CD14-positive monocyte (primary cell): ENCODE measurements at regions of chr1 and their contacts with region 1.

Region 1: DNA sequence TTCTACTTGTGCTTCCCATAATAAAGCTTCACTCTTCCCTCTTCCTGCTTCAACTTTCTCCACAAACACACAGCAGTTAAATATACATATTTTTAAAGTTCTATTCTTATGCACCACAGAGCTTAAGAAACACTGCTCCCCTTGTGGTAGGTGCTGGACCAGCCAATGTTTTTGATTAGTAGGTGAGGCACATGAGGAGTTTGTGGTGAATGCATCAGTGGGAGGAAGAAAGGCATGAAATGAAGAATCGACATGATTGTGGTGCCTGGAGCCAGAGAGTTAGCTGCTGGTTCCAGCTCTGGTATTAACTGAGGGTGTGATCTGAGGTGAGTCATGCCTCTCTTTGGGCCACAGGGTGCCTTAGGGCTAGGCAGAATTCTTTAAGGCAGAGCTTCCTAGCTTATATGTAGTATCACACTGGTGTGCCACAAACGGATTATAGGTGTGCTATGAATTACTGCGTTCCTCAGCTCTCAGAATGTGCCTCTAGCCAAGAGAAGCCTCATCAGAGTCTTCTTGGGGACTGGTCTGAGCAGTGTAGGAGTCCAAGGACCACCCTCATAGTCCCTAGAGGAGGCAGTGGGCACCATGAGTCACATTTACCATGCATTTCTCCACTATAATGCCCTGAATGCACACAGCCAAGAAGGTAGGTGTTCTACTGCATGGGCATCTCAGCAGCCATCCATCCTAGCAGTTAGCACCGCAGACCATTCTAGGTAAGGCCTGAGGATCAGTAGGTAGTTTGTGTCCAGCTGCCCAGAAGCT is 97.4 kb upstream of the SGIP1 start:
- DNase-seq: peak in 2 of 3 donors; percentile 19 to 60
- H3K4me3 ChIP-seq: no peak overlapping the region
- H3K4me3 Mint-ChIP-seq: no peak overlapping the region
- H3K27ac ChIP-seq: no peak overlapping the region
- H3K27ac Mint-ChIP-seq: peak overlapping the region in 5 of 7 donors; percentile 20 to 76 (median 58)
- H3K4me1 ChIP-seq: peaks cover 31 to 40% of the 10 kb centered on the region in 2 donors
- H3K4me1 Mint-ChIP-seq: peaks cover 37% of the 10 kb centered on the region
- H3K27me3 ChIP-seq: no peaks in the 10 kb centered on the region
- H3K27me3 Mint-ChIP-seq: no peaks in the 10 kb centered on the region
- CTCF ChIP-seq: peak; percentile 16

Region 2: GRCh38 chr1:66350001-66350547 is 86.5 kb before region 1 on chr1:
- intact Hi-C with region 1: no loop called
- DNase-seq: peak; percentile 57 to 87 (median 61)
- H3K4me3 ChIP-seq: peak overlapping the region in 2 of 3 experiments; percentile 37 to 59
- H3K4me3 Mint-ChIP-seq: peak overlapping the region in 1 of 2 donors; percentile 67
- H3K27ac ChIP-seq: peak overlapping the region in 1 of 2 donors; percentile 58
- H3K27ac Mint-ChIP-seq: peak overlapping the region in 6 of 7 donors; percentile 46 to 86 (median 76)
- H3K4me1 ChIP-seq: peaks cover 20 to 39% of the 10 kb centered on the region in 2 donors
- H3K4me1 Mint-ChIP-seq: peaks cover 50% of the 10 kb centered on the region
- H3K27me3 ChIP-seq: no peaks in the 10 kb centered on the region
- H3K27me3 Mint-ChIP-seq: no peaks in the 10 kb centered on the region
- CTCF ChIP-seq: no peak

Region 3: GRCh38 chr1:66402194-66402593 is 34.4 kb before region 1 on chr1:
- intact Hi-C with region 1: loop called (anchors 2 to 5 kb)
- DNase-seq: no peak
- H3K4me3 ChIP-seq: no peak overlapping the region
- H3K4me3 Mint-ChIP-seq: no peak overlapping the region
- H3K27ac ChIP-seq: no peak overlapping the region
- H3K27ac Mint-ChIP-seq: no peak overlapping the region
- H3K4me1 ChIP-seq: peaks cover 19 to 21% of the 10 kb centered on the region in 2 donors
- H3K4me1 Mint-ChIP-seq: peaks cover 52% of the 10 kb centered on the region
- H3K27me3 ChIP-seq: no peaks in the 10 kb centered on the region
- H3K27me3 Mint-ChIP-seq: peaks cover 0 to 3% (median 0%) of the 10 kb centered on the region in 3 donors
- CTCF ChIP-seq: no peak